SK-N-SH (cell line): ENCODE measurements at regions of chr1 and their contacts with region 1.

Region 1: DNA sequence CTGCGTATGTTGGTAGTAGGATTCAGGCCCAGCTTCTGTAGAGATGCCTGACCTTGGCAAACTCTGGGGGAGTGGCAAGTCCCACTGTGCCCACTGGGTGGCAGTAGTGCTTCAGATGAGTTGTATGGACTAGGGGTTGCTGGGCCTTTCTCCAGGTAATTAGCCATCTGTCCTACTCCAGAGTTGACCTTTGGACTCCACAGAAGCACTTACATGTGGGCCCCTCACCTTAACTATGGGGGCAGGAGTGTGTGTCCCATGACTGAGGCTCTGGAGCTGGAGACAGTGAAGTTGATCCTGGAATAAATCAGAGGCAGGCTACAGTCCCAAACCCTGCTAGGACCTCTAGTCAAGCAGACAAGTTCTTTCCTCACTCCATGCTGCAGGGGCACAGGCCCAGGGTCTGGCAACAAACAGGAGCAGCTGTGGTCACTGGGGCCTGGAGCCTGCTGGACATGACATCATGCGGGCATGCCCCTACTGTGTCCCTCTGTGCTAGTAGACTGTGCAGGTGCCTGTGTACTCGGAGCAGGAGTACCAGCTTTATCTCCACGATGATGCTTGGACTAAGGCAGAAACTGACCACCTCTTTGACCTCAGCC is 4.6 kb downstream of the DMAP1 start:
- DNase-seq: peak; percentile 84
- H3K4me3 ChIP-seq: no peak overlapping the region; a peak in 1 of 4 replicates
- H3K27ac ChIP-seq: no peak overlapping the region
- H3K4me1 ChIP-seq: peaks cover 0 to 12% of the 10 kb centered on the region in 2 experiments; a peak in 1 of 4 replicates
- H3K27me3 ChIP-seq: no peaks in the 10 kb centered on the region
- CTCF ChIP-seq: peak; percentile 91
- EP300 ChIP-seq: no peak
- RAD21 ChIP-seq: peak; percentile 89

Region 2: DNA sequence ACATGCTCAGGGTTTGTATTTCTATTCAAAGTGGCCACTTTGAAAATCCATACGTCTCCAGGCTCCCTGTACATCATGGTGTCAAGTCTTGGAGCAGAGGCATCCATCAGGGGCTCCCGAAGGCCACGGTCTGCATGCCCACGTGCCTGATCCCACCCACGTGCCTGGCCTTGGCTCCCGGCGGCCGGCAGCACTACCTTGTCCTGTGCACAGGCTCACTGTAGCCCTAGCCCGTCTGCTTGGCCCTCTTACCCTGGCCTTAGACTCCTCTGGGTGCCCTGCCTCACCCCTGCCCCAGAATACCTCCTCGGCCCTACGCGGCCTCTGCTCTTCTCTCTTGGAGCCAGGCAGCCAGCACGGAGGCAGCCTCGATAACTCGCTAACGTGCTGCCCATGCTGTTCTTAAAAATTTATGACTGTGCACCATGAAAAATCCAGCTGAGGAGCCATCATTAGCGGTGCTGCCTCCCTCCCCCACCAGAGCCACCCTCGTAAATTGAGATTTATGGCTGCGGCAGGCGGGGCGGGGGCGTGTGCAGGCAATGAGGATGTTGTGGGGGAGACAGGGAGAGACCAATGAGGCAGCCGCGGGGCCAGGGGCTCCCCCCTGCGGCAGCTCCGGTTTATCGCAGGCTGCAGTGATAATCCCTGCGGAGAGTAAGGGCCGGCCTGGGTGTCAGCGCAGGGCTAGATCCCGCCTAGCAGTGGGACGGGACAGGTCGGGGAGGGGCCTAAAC is 20.0 kb after region 1 on chr1:
- CTCF ChIA-PET with region 1: interaction called, 47 read pairs
- POLR2A ChIA-PET with region 1: no interaction called
- DNase-seq: peak; percentile 74
- H3K4me3 ChIP-seq: no peak overlapping the region
- H3K27ac ChIP-seq: no peak overlapping the region
- H3K4me1 ChIP-seq: peaks cover 10 to 32% of the 10 kb centered on the region in 2 experiments; a peak in 3 of 4 replicates
- H3K27me3 ChIP-seq: no peaks in the 10 kb centered on the region
- CTCF ChIP-seq: peak; percentile 42; the same call in 1 of the 2 replicates
- EP300 ChIP-seq: no peak
- RAD21 ChIP-seq: peak; percentile 10

Region 3: GRCh38 chr1:44270686-44271628 is 53.0 kb after region 1 on chr1:
- CTCF ChIA-PET with region 1: interaction called, 12 read pairs
- POLR2A ChIA-PET with region 1: no interaction called
- DNase-seq: no peak
- H3K4me3 ChIP-seq: no peak overlapping the region
- H3K27ac ChIP-seq: no peak overlapping the region
- H3K4me1 ChIP-seq: no peaks in the 10 kb centered on the region; a peak in 1 of 4 replicates
- H3K27me3 ChIP-seq: no peaks in the 10 kb centered on the region
- CTCF ChIP-seq: no peak
- EP300 ChIP-seq: no peak
- RAD21 ChIP-seq: no peak

Region 4: DNA sequence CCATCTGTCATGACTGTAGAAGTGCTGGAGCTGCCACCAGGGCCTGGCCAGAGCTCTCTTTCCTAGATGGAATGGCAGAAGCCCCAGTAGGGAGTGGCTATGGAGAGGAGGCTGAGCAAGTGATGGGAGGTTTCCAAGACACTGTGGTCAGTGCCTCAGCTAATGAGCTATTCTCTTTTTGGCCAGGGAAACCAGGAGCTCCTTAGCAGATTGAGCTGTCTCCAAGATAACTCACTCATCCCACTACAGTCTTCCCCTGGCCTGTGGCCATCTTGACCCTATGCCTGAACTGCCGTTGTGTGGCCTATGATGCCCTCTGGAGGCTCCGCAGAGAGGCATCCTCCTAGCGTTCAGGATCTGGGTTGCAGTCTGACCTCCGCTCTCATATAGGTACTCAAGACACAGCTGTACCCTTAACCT is 76.7 kb after region 1 on chr1:
- CTCF ChIA-PET with region 1: interaction called, 78 read pairs
- POLR2A ChIA-PET with region 1: no interaction called
- DNase-seq: peak; percentile 41
- H3K4me3 ChIP-seq: no peak overlapping the region
- H3K27ac ChIP-seq: peak overlapping the region in 1 of 2 experiments; percentile 69; a peak in 2 of 4 replicates
- H3K4me1 ChIP-seq: peaks cover 0 to 26% of the 10 kb centered on the region in 2 experiments; a peak in 1 of 4 replicates
- H3K27me3 ChIP-seq: no peaks in the 10 kb centered on the region
- CTCF ChIP-seq: peak; percentile 25; the same call in 1 of the 2 replicates
- EP300 ChIP-seq: no peak
- RAD21 ChIP-seq: peak; percentile 49

Region 5: DNA sequence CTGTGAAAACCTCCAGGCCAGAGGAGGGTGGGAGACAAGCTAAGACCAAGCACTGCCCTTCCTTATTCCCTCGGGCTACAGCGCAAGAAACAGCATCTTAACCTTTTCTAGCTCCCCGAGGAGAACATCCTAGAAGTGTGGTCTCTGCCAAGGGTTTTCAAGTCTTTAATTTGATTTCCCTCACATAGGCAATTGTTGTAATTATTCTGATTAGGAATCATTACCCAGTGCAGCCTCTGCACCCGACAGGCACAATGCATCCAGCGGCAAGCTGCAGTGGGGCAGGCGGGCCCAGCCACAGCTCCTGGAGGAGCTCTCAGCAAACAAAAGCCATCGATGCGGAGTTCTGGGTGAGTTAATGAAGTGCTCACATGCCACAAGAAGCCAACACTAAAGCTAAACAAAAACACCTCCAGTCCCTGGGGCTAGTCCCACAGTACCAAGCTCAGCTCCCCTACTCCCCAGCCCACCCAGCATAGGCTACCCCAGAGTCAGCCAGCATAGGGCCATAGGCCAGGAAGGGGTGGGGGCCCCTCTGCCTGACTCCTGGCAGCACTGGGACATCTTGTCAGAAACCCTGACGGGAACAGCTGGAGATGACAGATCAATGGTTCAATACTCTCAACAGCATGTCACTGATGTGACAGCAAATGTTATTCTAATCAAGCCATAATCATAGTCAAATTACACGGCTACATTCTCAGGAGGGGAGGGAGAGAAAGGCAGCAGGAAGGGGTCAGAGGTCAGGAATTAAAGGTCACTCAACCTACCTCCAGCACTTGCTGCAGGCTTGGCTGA is 94.7 kb after region 1 on chr1:
- CTCF ChIA-PET with region 1: interaction called, 89 read pairs
- POLR2A ChIA-PET with region 1: no interaction called
- DNase-seq: no peak
- H3K4me3 ChIP-seq: no peak overlapping the region
- H3K27ac ChIP-seq: no peak overlapping the region
- H3K4me1 ChIP-seq: no peaks in the 10 kb centered on the region; a peak in 1 of 4 replicates
- H3K27me3 ChIP-seq: no peaks in the 10 kb centered on the region
- CTCF ChIP-seq: no peak
- EP300 ChIP-seq: no peak
- RAD21 ChIP-seq: no peak

Region 6: DNA sequence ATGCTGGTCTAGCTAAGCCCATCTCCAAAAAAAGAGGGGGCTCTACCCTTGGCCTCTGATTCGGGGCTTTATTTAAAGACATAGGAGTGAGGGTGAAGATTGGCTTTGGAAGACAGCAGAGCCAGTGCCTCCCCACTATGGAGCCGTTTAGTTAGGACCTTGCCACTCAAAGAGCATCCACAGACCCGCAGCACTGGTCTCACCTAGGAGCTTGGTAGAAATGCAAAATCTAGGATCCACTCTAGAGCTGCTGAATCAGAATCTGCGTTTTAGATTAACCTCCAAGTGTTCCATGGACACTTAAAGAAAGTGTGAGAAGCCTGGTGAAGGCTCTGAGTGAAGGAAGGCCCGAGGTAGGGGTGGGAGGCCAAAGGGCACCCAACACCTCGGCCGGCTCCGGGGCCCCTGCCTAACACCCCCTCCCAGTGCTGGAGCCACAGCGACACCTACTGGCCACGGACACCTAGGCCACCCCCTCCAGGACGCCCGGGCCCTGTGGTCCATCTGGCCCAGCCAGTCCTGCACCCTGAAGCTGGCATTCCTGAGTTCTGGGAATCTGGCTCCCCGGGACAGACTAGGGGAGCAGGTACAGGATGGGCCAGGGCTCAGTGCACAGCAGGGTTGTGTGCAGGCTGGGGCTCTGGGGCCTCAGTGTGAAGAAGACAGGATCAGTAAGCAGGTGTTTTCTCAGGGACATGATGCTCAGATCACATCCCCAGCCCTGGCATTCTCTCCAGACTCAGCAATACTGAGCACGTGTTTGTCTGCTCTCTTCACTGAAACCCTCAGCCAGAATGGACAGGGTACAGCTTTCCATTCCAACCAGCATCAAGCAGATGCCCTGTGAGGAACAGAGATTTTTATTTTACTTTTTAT is 377.2 kb after region 1 on chr1:
- CTCF ChIA-PET with region 1: interaction called, 47 read pairs
- POLR2A ChIA-PET with region 1: no interaction called
- DNase-seq: peak; percentile 92
- H3K4me3 ChIP-seq: no peak overlapping the region
- H3K27ac ChIP-seq: no peak overlapping the region
- H3K4me1 ChIP-seq: no peaks in the 10 kb centered on the region
- H3K27me3 ChIP-seq: no peaks in the 10 kb centered on the region; the same call in 1 of the 2 replicates
- CTCF ChIP-seq: peak; percentile 95
- EP300 ChIP-seq: no peak
- RAD21 ChIP-seq: peak; percentile 81